Gastrocnemius medialis (tissue), 4 donors: ENCODE measurements at regions of chr12 and their contacts with region 1.

Region 1: DNA sequence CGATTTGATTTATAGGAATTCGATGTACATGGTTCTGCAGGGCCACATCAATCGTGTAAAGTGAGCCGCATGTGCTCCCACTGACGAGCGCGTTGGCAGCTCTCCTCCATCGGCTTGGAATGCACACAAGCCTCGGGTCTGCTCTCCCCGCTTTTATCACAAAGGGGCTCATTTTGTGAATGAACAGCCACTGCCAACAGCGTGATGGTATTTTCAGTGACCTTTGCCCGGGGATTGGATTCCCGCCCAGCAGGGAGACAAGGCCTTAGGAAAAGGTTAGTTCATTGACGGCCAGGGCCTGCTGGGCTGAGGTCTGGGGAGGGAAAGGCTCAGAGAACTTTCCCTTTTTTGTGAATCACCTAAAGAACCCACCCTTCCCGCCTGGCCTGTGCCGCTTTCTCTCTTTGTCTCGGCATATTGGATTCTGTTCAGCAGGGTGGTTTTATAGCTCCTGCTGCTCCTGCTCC is 232.1 kb downstream of the MSRB3 start:
- DNase-seq: no peak
- ATAC-seq: no peak
- H3K4me3 ChIP-seq: no peak overlapping the region
- H3K27ac ChIP-seq: no peak overlapping the region
- H3K4me1 ChIP-seq: peaks cover 0 to 5% of the 10 kb centered on the region in 2 donors
- H3K27me3 ChIP-seq: no peaks in the 10 kb centered on the region
- CTCF ChIP-seq: no peak
- POLR2A ChIP-seq: no peak

Region 2: GRCh38 chr12:65494537-65494936 is 16.1 kb before region 1 on chr12:
- in situ Hi-C with region 1: no loop called
- intact Hi-C with region 1: loop called (anchors 1 kb)
- DNase-seq: no peak
- ATAC-seq: no peak
- H3K4me3 ChIP-seq: no peak overlapping the region
- H3K27ac ChIP-seq: no peak overlapping the region
- H3K4me1 ChIP-seq: no peaks in the 10 kb centered on the region
- H3K27me3 ChIP-seq: no peaks in the 10 kb centered on the region
- CTCF ChIP-seq: no peak
- POLR2A ChIP-seq: no peak

Region 3: GRCh38 chr12:65594409-65594808 is 83.8 kb after region 1 on chr12:
- in situ Hi-C with region 1: no loop called
- intact Hi-C with region 1: no loop called
- DNase-seq: no peak
- ATAC-seq: no peak
- H3K4me3 ChIP-seq: no peak overlapping the region
- H3K27ac ChIP-seq: no peak overlapping the region
- H3K4me1 ChIP-seq: no peaks in the 10 kb centered on the region
- H3K27me3 ChIP-seq: peaks cover 0 to 2% (median 0%) of the 10 kb centered on the region in 3 donors
- CTCF ChIP-seq: no peak
- POLR2A ChIP-seq: no peak